ENCODE measurements at regions of chr15 and their contacts with region 1.

Region 1: GRCh38 chr15:33473714-33474113 is 162.9 kb downstream of the RYR3 start:
- DNase-seq: no peak
- ATAC-seq: no peak
- H3K4me3 ChIP-seq: no peak overlapping the region
- H3K27ac ChIP-seq: no peak overlapping the region
- H3K4me1 ChIP-seq: no peaks in the 10 kb centered on the region
- H3K27me3 ChIP-seq: peaks cover 48% of the 10 kb centered on the region; the same call in 1 of the 2 replicates
- CTCF ChIP-seq: no peak
- POLR2A ChIP-seq: no peak
- RAD21 ChIP-seq: no peak

Region 2: GRCh38 chr15:33278816-33279612 is 194.7 kb before region 1 on chr15:
- CTCF ChIA-PET with region 1: no interaction called
- POLR2A ChIA-PET with region 1: no interaction called
- RAD21 ChIA-PET with region 1: no interaction called
- intact Hi-C with region 1: no loop called
- DNase-seq: peak; percentile 92
- ATAC-seq: peak; percentile 99
- H3K4me3 ChIP-seq: peak overlapping the region in 1 of 2 experiments; percentile 5; a peak in 1 of 4 replicates
- H3K27ac ChIP-seq: peak overlapping the region; percentile 42; the same call in 1 of the 2 replicates
- H3K4me1 ChIP-seq: peaks cover 15 to 18% of the 10 kb centered on the region in 2 experiments
- H3K27me3 ChIP-seq: no peaks in the 10 kb centered on the region
- CTCF ChIP-seq: peak in 2 of 3 experiments; percentile 18 to 28; a peak in 2 of 6 replicates
- POLR2A ChIP-seq: no peak
- RAD21 ChIP-seq: no peak

Region 3: GRCh38 chr15:33430577-33430976 is 43.1 kb before region 1 on chr15:
- CTCF ChIA-PET with region 1: no interaction called
- POLR2A ChIA-PET with region 1: no interaction called
- RAD21 ChIA-PET with region 1: no interaction called
- intact Hi-C with region 1: loop called (anchors 1 kb)
- DNase-seq: no peak
- ATAC-seq: no peak
- H3K4me3 ChIP-seq: no peak overlapping the region
- H3K27ac ChIP-seq: no peak overlapping the region
- H3K4me1 ChIP-seq: no peaks in the 10 kb centered on the region
- H3K27me3 ChIP-seq: peaks cover 46% of the 10 kb centered on the region
- CTCF ChIP-seq: no peak
- POLR2A ChIP-seq: no peak
- RAD21 ChIP-seq: no peak

Region 4: GRCh38 chr15:33453761-33454160 is 20.0 kb before region 1 on chr15:
- CTCF ChIA-PET with region 1: no interaction called
- POLR2A ChIA-PET with region 1: no interaction called
- RAD21 ChIA-PET with region 1: no interaction called
- intact Hi-C with region 1: no loop called
- DNase-seq: no peak
- ATAC-seq: no peak
- H3K4me3 ChIP-seq: no peak overlapping the region
- H3K27ac ChIP-seq: no peak overlapping the region
- H3K4me1 ChIP-seq: no peaks in the 10 kb centered on the region
- H3K27me3 ChIP-seq: peaks cover 82% of the 10 kb centered on the region
- CTCF ChIP-seq: no peak
- POLR2A ChIP-seq: no peak
- RAD21 ChIP-seq: no peak

Region 5: GRCh38 chr15:33492434-33493052 is 18.8 kb after region 1 on chr15:
- CTCF ChIA-PET with region 1: no interaction called
- POLR2A ChIA-PET with region 1: no interaction called
- RAD21 ChIA-PET with region 1: no interaction called
- intact Hi-C with region 1: no loop called
- DNase-seq: no peak
- ATAC-seq: no peak
- H3K4me3 ChIP-seq: no peak overlapping the region
- H3K27ac ChIP-seq: no peak overlapping the region
- H3K4me1 ChIP-seq: no peaks in the 10 kb centered on the region
- H3K27me3 ChIP-seq: peaks cover 61% of the 10 kb centered on the region
- CTCF ChIP-seq: no peak
- POLR2A ChIP-seq: no peak
- RAD21 ChIP-seq: no peak

Region 6: GRCh38 chr15:33526532-33526931 is 52.8 kb after region 1 on chr15:
- CTCF ChIA-PET with region 1: no interaction called
- POLR2A ChIA-PET with region 1: no interaction called
- RAD21 ChIA-PET with region 1: no interaction called
- intact Hi-C with region 1: no loop called
- DNase-seq: no peak
- ATAC-seq: no peak
- H3K4me3 ChIP-seq: no peak overlapping the region
- H3K27ac ChIP-seq: no peak overlapping the region
- H3K4me1 ChIP-seq: no peaks in the 10 kb centered on the region
- H3K27me3 ChIP-seq: peaks cover 49% of the 10 kb centered on the region
- CTCF ChIP-seq: no peak
- POLR2A ChIP-seq: no peak
- RAD21 ChIP-seq: no peak